K562 (cell line): ENCODE measurements at regions of chr11 and their contacts with region 1.

Region 1: DNA sequence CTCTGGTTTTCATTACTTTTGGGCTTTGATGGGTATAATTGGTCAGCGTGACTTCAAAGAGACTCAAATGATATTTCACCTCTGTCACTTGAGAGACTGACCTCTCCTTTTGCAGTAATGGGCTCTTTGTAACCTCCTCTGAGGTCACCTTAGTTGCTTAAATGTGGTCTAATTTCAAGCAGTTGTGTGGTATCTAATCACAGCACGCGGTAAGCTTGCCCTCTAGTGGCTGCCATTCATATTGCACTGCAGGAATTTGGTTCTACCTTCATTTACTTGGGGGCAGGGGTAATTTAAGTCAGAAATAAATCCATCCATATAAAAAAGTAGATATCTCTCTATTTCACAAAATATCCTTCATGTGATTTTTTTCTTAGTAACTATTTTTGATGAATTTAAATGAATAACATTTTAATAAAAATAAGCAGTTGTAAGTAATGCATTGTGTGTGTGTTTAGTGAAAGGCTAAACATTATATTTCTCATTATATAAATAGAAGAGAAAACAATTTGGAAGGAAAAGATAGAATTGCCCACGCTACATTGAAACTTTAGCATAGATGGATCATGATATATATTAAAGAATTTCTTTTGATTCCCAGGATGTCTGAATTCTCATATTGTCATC is 55.0 kb upstream of the ANO3 start:
- DNase-seq: peak; percentile 13 to 57 (median 53)
- ATAC-seq: peak; percentile 75; the same call in 2 of the 3 replicates
- H3K4me3 ChIP-seq: no peak overlapping the region
- H3K27ac ChIP-seq: no peak overlapping the region
- H3K4me1 ChIP-seq: no peaks in the 10 kb centered on the region
- H3K27me3 ChIP-seq: no peaks in the 10 kb centered on the region
- CTCF ChIP-seq: peak; percentile 60 to 85 (median 78)
- EP300 ChIP-seq: no peak
- POLR2A ChIP-seq: no peak
- RAD21 ChIP-seq: peak; percentile 66 to 81

Region 2: GRCh38 chr11:25981998-25982397 is 294.9 kb before region 1 on chr11:
- CTCF ChIA-PET with region 1: interaction called, 4 read pairs
- POLR2A ChIA-PET with region 1: no interaction called
- in situ Hi-C with region 1: no loop called
- intact Hi-C with region 1: loop called (anchors 5 kb)
- DNase-seq: peak in 1 of 4 experiments; percentile 14
- ATAC-seq: no peak
- H3K4me3 ChIP-seq: no peak overlapping the region
- H3K27ac ChIP-seq: no peak overlapping the region
- H3K4me1 ChIP-seq: no peaks in the 10 kb centered on the region
- H3K27me3 ChIP-seq: no peaks in the 10 kb centered on the region
- CTCF ChIP-seq: peak in 1 of 3 experiments; percentile 20; a peak in 1 of 6 replicates
- EP300 ChIP-seq: no peak
- POLR2A ChIP-seq: no peak
- RAD21 ChIP-seq: peak in 1 of 2 experiments; percentile 27; a peak in 2 of 4 replicates